Cardiac septum (tissue), 1 donor: ENCODE measurements at regions of chr3 and their contacts with region 1.

Region 1: DNA sequence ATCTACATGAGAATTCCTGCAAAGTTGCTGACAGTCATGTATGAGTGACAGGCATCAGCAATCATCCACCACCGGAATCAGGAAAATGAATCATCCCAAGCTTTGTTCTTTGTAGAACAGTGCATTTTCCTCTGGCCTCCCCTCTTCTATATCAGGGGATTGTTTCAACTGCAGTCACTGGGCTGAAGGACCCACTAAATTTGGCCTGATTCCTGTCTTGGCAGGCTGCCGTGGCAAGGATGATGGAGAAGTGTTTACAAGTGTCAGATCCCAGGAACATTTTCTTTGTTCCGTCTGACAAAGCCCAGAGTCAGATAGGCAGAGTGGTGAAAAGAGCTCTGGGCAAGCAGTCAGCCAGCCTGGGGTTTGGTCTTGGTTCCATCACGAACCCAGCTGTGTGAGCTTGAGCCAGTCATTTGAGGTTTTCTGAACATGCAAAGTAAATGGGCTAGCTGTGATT is 175.1 kb upstream of the TSC22D2 start:
- DNase-seq: peak; percentile 90

Region 2: DNA sequence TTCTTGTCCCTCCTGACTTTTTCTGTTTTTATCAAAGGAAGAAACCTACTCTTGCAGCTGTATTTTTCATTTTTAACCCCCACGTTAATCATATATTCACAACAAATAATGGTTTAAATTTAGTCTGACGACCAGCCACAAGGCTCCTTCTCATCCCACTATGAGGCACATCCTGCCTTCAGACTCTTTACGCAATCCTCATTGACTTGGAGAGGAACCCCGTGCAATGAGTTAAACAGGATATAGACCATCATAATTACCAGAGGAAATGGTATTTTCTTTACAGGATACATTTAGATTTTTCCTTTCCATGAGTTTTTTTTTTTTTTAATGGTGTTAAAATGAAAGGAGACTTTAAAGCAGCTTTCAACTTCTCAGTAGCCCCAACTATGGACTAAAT is 643.7 kb before region 1 on chr3:
- intact Hi-C with region 1: no loop called
- DNase-seq: no peak

Region 3: DNA sequence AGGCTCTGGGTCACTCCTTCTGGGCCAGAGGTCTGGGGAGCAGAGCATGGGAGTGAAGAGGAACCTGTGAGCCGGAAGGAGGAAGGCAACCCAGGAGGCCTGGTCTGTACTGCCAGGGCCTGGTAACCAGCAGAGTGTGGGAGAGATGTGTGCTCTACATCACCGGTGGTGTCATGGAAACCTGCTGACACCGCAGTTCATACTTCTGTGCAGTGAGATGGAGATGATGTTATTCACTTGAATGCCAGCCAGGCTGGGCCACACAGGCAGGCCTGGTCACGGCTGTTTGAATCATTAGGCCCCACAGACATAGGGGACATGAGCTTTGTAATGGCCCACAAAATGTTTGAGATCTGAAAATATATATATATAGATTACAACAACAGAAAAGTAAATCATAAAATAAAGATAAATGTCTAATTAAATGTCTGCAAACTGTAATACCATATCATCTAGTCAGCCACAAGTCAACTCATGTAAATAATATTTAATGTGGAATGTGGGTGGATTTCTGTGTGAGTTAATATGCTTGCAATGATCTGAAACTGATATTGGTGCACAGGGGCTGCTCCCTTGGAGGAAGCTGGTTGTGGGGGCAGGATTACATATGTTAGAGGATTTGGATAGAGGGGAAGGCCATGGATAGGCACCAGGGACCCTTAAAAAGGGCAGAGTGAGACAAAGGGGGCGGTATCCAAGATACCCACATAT is 153.8 kb before region 1 on chr3:
- intact Hi-C with region 1: no loop called
- DNase-seq: no peak

Region 4: DNA sequence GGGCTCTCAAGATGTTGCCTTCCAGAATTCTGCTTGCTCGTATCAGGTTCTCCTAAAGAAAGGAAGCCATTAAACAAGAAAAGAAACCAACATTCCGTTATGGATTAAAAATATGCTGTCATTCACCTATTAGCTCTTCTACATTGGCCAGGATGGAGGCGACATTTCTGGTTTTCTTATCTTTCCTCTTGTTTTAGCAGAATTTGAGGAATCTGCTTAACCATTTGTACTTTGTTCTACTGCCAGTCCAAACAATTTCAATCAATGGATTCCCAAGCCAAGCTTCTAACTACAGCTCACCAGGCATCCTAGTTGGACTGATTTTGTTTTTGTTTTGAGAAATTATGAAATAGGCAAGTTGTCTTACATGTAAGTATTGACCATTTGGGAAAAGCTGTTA is 10.4 kb after region 1 on chr3:
- intact Hi-C with region 1: no loop called
- DNase-seq: no peak

Region 5: DNA sequence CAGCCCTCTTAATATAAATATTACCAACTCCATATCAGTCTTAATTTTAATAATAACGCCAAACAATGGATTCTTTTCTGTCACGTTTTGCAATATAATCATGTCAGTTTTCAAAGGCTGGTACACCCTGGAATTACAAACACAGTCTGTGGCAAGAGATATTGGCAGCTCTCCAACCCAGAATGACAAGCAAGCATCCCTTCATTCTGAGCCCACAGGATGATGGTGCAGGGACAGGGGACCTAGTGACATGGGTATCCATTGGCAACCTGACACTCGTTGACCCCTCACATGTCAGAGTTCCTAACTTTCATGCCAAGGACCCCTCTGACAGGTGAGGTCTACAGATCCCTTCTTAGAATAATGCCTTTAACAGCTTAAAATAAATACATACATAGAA is 20.6 kb after region 1 on chr3:
- intact Hi-C with region 1: loop called (anchors 1 kb)
- DNase-seq: no peak

Region 6: DNA sequence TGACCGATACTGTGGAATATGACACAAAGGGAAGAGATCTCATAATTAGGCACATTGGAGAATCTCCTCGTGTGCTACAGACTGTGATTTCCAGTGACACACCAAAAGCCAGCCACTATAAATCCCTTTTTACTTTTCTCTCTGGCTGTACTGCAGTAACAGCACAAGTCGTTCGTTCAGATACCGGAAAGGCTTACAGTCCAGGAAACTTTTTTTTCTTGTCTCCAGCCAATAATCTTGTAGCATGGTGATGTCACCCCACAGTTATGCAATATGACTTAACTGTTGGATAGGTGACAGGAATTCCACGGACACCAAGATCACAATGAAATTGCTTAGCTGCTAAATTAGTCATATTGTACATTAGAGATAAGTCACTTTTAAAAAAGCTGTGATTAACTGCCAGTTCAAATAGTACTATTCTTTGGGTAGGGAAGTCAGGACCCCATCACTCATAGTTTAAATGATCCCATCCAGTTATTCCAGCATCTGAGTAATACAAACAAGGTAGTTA is 138.8 kb after region 1 on chr3:
- intact Hi-C with region 1: loop called (anchors 1 kb)
- DNase-seq: no peak